ENCODE measurements at regions of chr16 and their contacts with region 1.

Region 1: GRCh38 chr16:10729104-10730048 is 14.3 kb upstream of the NUBP1 start:
- DNase-seq: peak; percentile 21
- H3K4me3 ChIP-seq: no peak overlapping the region
- H3K27ac ChIP-seq: no peak overlapping the region
- H3K4me1 ChIP-seq: no peaks in the 10 kb centered on the region
- H3K27me3 ChIP-seq: no peaks in the 10 kb centered on the region
- CTCF ChIP-seq: no peak
- EP300 ChIP-seq: no peak
- POLR2A ChIP-seq: no peak

Region 2: DNA sequence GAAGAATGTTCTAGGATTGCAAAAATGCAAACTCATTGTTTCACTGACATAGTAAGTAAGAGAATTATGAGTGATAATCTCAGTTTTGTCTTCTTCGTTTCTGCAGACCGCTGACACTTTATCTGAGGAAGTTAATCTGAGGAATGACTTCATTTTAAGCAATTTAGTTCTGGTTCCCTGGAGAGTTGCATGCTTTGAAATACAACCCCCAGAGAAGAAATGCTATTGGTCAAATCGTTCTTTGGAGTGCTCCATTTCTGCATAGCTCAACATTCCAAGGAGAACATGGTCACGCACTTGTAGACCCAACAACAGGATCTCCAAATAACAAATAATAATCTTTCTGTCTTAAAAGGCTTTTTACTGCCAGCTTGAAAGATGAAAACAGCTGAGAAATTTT is 974.3 kb before region 1 on chr16:
- in situ Hi-C with region 1: no loop called
- intact Hi-C with region 1: loop called (anchors 5 kb)
- DNase-seq: no peak
- H3K4me3 ChIP-seq: no peak overlapping the region
- H3K27ac ChIP-seq: no peak overlapping the region
- H3K4me1 ChIP-seq: no peaks in the 10 kb centered on the region
- H3K27me3 ChIP-seq: no peaks in the 10 kb centered on the region
- CTCF ChIP-seq: no peak
- EP300 ChIP-seq: no peak
- POLR2A ChIP-seq: no peak

Region 3: GRCh38 chr16:10688341-10689125 is 40.8 kb before region 1 on chr16:
- in situ Hi-C with region 1: no loop called
- intact Hi-C with region 1: no loop called
- DNase-seq: peak; percentile 70
- H3K4me3 ChIP-seq: no peak overlapping the region
- H3K27ac ChIP-seq: peak overlapping the region in 1 of 4 donors; percentile 5
- H3K4me1 ChIP-seq: peaks cover 0 to 4% (median 0%) of the 10 kb centered on the region in 4 donors
- H3K27me3 ChIP-seq: no peaks in the 10 kb centered on the region
- CTCF ChIP-seq: no peak
- EP300 ChIP-seq: no peak
- POLR2A ChIP-seq: no peak

Region 4: GRCh38 chr16:10828851-10829731 is 99.7 kb after region 1 on chr16:
- in situ Hi-C with region 1: no loop called
- intact Hi-C with region 1: no loop called
- DNase-seq: peak; percentile 86
- H3K4me3 ChIP-seq: peak overlapping the region in 1 of 4 donors; percentile 13
- H3K27ac ChIP-seq: peak overlapping the region; percentile 77 to 93 (median 84)
- H3K4me1 ChIP-seq: peaks cover 13 to 38% (median 21%) of the 10 kb centered on the region in 4 donors
- H3K27me3 ChIP-seq: no peaks in the 10 kb centered on the region
- CTCF ChIP-seq: no peak
- EP300 ChIP-seq: peak; percentile 22
- POLR2A ChIP-seq: no peak